ENCODE measurements at regions of chr1 and their contacts with region 1.

Region 1: GRCh38 chr1:84442256-84442655 is 36.8 kb upstream of the RPF1 start:
- DNase-seq: peak; percentile 47 to 78 (median 72)
- H3K4me3 ChIP-seq: no peak overlapping the region
- H3K4me3 Mint-ChIP-seq: peak overlapping the region in 6 of 8 donors; percentile 37 to 68 (median 48)
- H3K27ac ChIP-seq: no peak overlapping the region
- H3K27ac Mint-ChIP-seq: peak overlapping the region in 6 of 7 donors; percentile 10 to 87 (median 62)
- H3K4me1 ChIP-seq: peaks cover 15% of the 10 kb centered on the region
- H3K4me1 Mint-ChIP-seq: peaks cover 12 to 22% (median 17%) of the 10 kb centered on the region in 4 donors
- H3K27me3 ChIP-seq: no peaks in the 10 kb centered on the region
- H3K27me3 Mint-ChIP-seq: peaks cover 4 to 9% of the 10 kb centered on the region in 2 donors

Region 2: GRCh38 chr1:84253891-84254290 is 188.4 kb before region 1 on chr1:
- CTCF ChIA-PET with region 1: no interaction called
- POLR2A ChIA-PET with region 1: no interaction called
- intact Hi-C with region 1: no loop called
- DNase-seq: no peak
- H3K4me3 ChIP-seq: no peak overlapping the region
- H3K4me3 Mint-ChIP-seq: no peak overlapping the region
- H3K27ac ChIP-seq: no peak overlapping the region
- H3K27ac Mint-ChIP-seq: no peak overlapping the region
- H3K4me1 ChIP-seq: no peaks in the 10 kb centered on the region
- H3K4me1 Mint-ChIP-seq: no peaks in the 10 kb centered on the region
- H3K27me3 ChIP-seq: no peaks in the 10 kb centered on the region
- H3K27me3 Mint-ChIP-seq: no peaks in the 10 kb centered on the region

Region 3: GRCh38 chr1:84506002-84506728 is 63.9 kb after region 1 on chr1 and contains the starts of genes GNG5 and SPATA1:
- CTCF ChIA-PET with region 1: interaction called, 15 read pairs
- POLR2A ChIA-PET with region 1: interaction called, 16 read pairs
- intact Hi-C with region 1: loop called (anchors 2 kb)
- DNase-seq: peak; percentile 94 to 97 (median 96)
- H3K4me3 ChIP-seq: peak within 1 kb of the TSS; percentile 68 to 87
- H3K4me3 Mint-ChIP-seq: peak within 1 kb of the TSS; percentile 92 to 99 (median 98)
- H3K27ac ChIP-seq: peak within 1 kb of the TSS; percentile 81
- H3K27ac Mint-ChIP-seq: peak within 1 kb of the TSS; percentile 93 to 99 (median 97)
- H3K4me1 ChIP-seq: peaks cover 47% of the 10 kb centered on the region
- H3K4me1 Mint-ChIP-seq: peaks cover 28 to 55% (median 34%) of the 10 kb centered on the region in 4 donors
- H3K27me3 ChIP-seq: no peaks in the 10 kb centered on the region
- H3K27me3 Mint-ChIP-seq: no peaks in the 10 kb centered on the region
- total RNA-seq, gene GNG5: 38.1 to 45.5 TPM
- total RNA-seq, gene SPATA1: 1.7 to 3.4 TPM

Region 4: DNA sequence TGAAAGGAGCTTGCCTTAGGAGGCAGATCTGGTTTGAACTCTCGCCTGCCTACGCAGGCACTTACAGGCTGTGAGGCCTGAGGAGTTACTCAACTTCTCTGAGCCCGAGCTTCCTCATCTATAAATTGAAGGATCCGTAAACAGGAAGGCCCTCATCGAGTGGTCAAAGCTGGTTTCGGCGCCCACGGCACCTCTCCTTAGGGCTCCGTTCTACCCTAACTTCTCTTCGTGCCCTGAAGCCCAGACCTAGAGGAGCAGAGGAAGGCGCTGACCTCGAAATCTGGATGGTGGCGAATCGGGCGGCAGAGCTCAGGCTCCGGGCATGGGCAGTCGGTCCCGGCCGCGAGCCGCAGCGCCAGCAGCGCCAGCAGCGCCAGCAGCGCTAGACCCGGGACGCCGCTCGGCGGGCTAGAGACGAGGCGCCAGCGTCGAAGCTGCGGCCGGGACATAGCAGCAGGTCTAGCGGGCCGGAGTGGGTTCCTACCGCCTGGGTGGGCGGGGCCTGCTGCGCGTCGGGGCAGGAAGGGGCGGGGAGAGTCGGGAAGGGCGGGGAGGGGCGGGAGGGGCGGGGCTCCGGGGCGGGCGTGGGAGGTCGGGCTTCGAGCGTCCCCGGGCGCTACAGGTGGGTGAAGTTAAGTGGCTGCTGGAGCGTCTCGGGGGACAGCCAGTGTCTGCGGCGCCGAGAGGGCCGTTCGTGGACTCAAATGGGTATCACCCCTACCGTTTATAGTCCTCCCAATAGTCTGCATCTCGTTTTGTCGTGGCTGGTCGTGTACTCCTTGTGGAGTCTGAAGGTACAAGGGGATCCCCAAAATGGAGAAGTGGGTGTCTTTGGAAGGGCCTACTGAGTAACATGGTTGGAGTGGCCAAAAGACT is 131.9 kb after region 1 on chr1 and contains the start of gene CTBS:
- CTCF ChIA-PET with region 1: interaction called, 13 read pairs
- POLR2A ChIA-PET with region 1: interaction called, 24 read pairs
- intact Hi-C with region 1: loop called (anchors 1 kb)
- DNase-seq: peak; percentile 80 to 84 (median 83)
- H3K4me3 ChIP-seq: peak within 1 kb of the TSS; percentile 78 to 97
- H3K4me3 Mint-ChIP-seq: peak within 1 kb of the TSS; percentile 96 to 99 (median 98)
- H3K27ac ChIP-seq: peak within 1 kb of the TSS; percentile 98
- H3K27ac Mint-ChIP-seq: peak within 1 kb of the TSS; percentile 99 to 100 (median 100)
- H3K4me1 ChIP-seq: peaks cover 37% of the 10 kb centered on the region
- H3K4me1 Mint-ChIP-seq: peaks cover 29 to 46% (median 39%) of the 10 kb centered on the region in 4 donors
- H3K27me3 ChIP-seq: no peaks in the 10 kb centered on the region
- H3K27me3 Mint-ChIP-seq: no peaks in the 10 kb centered on the region
- total RNA-seq, gene CTBS: 17.4 to 18.2 TPM

Region 5: GRCh38 chr1:84772428-84772943 is 330.2 kb after region 1 on chr1:
- CTCF ChIA-PET with region 1: interaction called, 13 read pairs
- POLR2A ChIA-PET with region 1: no interaction called
- intact Hi-C with region 1: loop called (anchors 1 kb)
- DNase-seq: peak; percentile 52 to 66 (median 64)
- H3K4me3 ChIP-seq: no peak overlapping the region
- H3K4me3 Mint-ChIP-seq: no peak overlapping the region
- H3K27ac ChIP-seq: no peak overlapping the region
- H3K27ac Mint-ChIP-seq: peak overlapping the region in 1 of 7 donors; percentile 15
- H3K4me1 ChIP-seq: no peaks in the 10 kb centered on the region
- H3K4me1 Mint-ChIP-seq: peaks cover 0 to 5% (median under 1%) of the 10 kb centered on the region in 4 donors
- H3K27me3 ChIP-seq: no peaks in the 10 kb centered on the region
- H3K27me3 Mint-ChIP-seq: peaks cover 7 to 10% of the 10 kb centered on the region in 2 donors

Measured in CD4-positive, alpha-beta memory T cell (primary cell).